T-cell (primary cell): ENCODE measurements at regions of chr15 and their contacts with region 1.

Region 1: GRCh38 chr15:59384507-59384906 is 11.8 kb upstream of the MYO1E start:
- DNase-seq: peak in 3 of 35 experiments; percentile 4 to 48 (median 13)
- ATAC-seq: peak in 2 of 4 experiments; percentile 19 to 45
- H3K4me3 ChIP-seq: no peak overlapping the region
- H3K4me3 Mint-ChIP-seq: no peak overlapping the region
- H3K27ac ChIP-seq: no peak overlapping the region
- H3K27ac Mint-ChIP-seq: no peak overlapping the region
- H3K4me1 ChIP-seq: peaks cover 0 to 12% of the 10 kb centered on the region in 2 experiments
- H3K4me1 Mint-ChIP-seq: peaks cover 0 to 5% (median 2%) of the 10 kb centered on the region in 3 donors
- H3K27me3 ChIP-seq: peaks cover 0 to 8% of the 10 kb centered on the region in 2 experiments
- H3K27me3 Mint-ChIP-seq: peaks cover 0 to 4% of the 10 kb centered on the region in 2 donors

Region 2: DNA sequence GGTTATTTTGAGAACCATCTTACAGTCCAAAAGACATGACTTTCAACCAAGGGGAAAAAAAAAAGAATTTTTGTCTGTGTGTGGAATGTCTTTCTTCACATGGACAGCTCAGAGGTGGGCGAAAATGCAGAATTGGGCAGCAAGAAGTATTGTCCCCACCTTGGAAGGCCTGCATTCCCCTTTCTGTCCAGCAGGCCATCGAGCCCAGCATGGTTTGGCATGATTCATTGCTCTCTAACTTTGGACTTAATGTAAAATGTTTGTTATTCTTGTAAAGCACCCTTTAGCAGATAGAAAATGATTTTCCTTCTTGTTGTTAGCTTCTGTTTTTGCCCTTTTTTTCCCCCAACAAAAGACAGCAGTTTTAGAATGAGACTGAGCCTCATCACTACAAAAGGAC is 24.2 kb before region 1 on chr15:
- CTCF ChIA-PET with region 1: no interaction called
- POLR2A ChIA-PET with region 1: interaction called in 1 of 2 experiments, 10 read pairs
- DNase-seq: no peak
- ATAC-seq: no peak
- H3K4me3 ChIP-seq: no peak overlapping the region
- H3K4me3 Mint-ChIP-seq: no peak overlapping the region
- H3K27ac ChIP-seq: no peak overlapping the region
- H3K27ac Mint-ChIP-seq: no peak overlapping the region
- H3K4me1 ChIP-seq: peaks cover 0 to under 1% of the 10 kb centered on the region in 2 experiments
- H3K4me1 Mint-ChIP-seq: peaks cover 4 to 6% (median 5%) of the 10 kb centered on the region in 3 donors
- H3K27me3 ChIP-seq: no peaks in the 10 kb centered on the region
- H3K27me3 Mint-ChIP-seq: peaks cover 8 to 11% of the 10 kb centered on the region in 2 donors

Region 3: DNA sequence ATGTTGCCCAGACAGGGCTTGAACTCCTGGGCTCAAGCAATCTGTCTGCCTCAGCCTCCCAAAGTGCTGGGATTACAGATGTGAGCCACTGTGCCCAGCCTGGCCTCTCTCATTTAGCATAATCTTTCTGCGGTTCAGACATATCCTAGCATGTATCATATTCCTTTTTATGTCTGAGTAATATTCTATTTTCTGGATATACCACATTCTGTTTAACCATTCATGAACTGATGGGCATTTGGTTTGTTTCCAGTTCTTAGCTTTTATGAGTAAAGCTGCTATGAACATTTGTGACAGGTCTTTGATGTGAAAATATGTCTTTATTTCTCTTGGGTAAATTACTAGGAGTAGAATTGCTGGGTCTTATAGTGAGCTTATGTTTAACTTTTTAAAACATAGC is 77.0 kb after region 1 on chr15:
- CTCF ChIA-PET with region 1: no interaction called
- POLR2A ChIA-PET with region 1: no interaction called
- DNase-seq: no peak
- ATAC-seq: no peak
- H3K4me3 ChIP-seq: no peak overlapping the region
- H3K4me3 Mint-ChIP-seq: no peak overlapping the region
- H3K27ac ChIP-seq: no peak overlapping the region
- H3K27ac Mint-ChIP-seq: no peak overlapping the region
- H3K4me1 ChIP-seq: no peaks in the 10 kb centered on the region
- H3K4me1 Mint-ChIP-seq: no peaks in the 10 kb centered on the region
- H3K27me3 ChIP-seq: no peaks in the 10 kb centered on the region
- H3K27me3 Mint-ChIP-seq: peaks cover 0 to 1% of the 10 kb centered on the region in 2 donors